Left lung (tissue), 14 donors: ENCODE measurements at regions of chr7 and their contacts with region 1.

Region 1: DNA sequence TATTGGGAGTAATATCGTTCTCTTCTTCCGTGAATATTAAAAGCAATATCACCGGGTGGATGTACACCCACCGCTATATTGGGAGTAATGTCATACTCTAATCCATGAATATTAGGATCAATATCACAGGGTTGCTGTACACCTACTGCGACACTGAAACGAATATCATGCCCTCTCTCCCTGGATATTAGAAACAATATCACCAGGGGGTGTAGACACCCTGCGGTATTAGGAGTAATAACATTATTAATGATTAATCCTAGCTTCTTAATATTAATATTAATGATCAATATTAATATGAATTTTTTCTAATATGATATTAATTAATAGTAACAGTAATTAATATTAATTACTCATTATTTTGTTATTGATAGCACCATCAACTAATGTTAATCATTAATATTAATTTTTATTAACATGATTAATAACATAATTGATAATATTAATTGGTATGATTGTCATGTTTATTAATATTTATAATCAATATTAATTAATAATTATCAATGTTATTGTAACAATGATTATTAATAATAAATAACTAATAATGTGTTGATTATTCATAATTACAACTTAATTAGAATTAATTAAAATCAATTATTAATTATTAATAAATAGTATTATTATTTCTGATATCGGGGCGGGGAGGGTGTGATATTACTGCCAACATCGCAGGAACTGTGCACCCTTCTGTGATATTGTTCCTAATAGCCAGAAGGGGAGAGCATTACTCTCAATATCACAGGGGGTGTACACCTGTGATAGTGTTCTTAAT is 121.3 kb upstream of the C1GALT1 start:
- DNase-seq: no peak
- ATAC-seq: no peak
- H3K4me3 ChIP-seq: no peak overlapping the region
- H3K27ac ChIP-seq: no peak overlapping the region
- H3K4me1 ChIP-seq: no peaks in the 10 kb centered on the region
- H3K27me3 ChIP-seq: no peaks in the 10 kb centered on the region
- CTCF ChIP-seq: no peak

Region 2: DNA sequence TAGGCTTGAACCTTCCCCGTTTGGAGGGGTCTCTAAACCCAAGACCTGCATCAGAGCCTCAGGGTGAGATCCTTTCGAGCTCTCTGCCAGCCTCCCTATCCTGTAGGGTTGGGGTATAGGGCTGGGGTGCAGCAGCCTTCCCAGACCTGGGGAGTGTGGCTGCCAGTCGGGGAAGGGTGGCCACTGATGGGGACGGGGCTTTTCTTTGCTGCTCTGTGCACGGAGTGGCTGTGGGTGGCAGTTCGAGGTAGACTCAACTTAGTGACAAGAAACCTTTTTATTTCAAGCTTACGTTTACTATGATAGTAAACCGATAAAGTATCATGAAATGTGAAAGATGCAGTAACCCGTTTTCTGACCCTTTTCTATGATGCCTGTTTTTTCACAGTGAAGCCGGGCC is 410.9 kb before region 1 on chr7:
- intact Hi-C with region 1: no loop called
- DNase-seq: peak in 1 of 4 donors; percentile 19
- ATAC-seq: no peak
- H3K4me3 ChIP-seq: no peak overlapping the region
- H3K27ac ChIP-seq: no peak overlapping the region
- H3K4me1 ChIP-seq: no peaks in the 10 kb centered on the region
- H3K27me3 ChIP-seq: no peaks in the 10 kb centered on the region
- CTCF ChIP-seq: no peak

Region 3: DNA sequence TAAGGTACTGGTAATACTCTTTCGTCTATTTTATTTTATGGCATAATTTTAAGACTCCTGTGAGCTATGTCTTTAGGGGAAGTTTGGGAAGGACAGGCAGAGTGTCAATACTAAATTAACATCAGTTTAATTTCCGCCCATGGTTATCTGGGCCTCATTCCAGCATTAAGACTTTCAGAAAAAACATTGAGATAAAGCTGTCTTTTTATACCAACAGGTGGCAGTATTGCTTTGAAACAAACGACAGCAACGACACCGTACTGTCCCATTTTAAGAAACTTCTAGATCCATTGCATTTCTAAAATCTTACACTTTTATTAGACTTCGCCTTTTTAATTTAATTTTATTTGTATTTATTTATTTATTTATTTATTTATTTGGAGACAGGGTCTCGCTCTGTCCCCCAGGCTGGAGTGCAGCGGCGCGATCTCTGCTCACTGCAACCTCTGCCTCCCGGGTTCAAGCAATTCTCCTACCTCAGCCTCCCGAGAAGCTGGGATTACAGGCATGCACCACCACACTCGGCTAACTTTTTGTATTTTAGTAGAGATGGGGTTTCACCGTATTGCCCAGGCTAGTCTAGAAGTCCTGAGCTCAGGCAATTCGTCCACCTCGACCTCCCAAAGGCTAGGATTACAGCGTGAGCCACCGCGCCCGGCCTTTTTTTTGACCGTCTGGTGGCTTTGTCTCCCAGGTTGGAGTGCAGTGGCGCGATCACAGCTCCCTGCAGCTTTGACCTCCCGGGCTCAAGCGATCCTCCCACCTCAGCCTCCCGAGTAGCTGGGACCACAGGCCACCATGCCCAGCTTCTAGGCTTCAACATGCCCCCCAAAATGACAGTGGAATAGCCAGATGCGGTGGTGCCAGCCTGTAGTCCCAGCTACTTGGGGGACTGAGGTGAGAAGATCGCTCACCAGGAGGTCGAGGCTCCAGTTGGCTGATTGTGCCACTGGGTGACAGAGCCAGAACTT is 42.6 kb after region 1 on chr7:
- intact Hi-C with region 1: loop called in 1 of 2 experiments (anchors 5 kb)
- DNase-seq: peak in 3 of 4 donors; percentile 37 to 73 (median 64)
- ATAC-seq: peak; percentile 78
- H3K4me3 ChIP-seq: no peak overlapping the region
- H3K27ac ChIP-seq: no peak overlapping the region
- H3K4me1 ChIP-seq: peaks cover 10 to 11% of the 10 kb centered on the region in 2 donors
- H3K27me3 ChIP-seq: no peaks in the 10 kb centered on the region
- CTCF ChIP-seq: peak; percentile 60 to 64

Region 4: DNA sequence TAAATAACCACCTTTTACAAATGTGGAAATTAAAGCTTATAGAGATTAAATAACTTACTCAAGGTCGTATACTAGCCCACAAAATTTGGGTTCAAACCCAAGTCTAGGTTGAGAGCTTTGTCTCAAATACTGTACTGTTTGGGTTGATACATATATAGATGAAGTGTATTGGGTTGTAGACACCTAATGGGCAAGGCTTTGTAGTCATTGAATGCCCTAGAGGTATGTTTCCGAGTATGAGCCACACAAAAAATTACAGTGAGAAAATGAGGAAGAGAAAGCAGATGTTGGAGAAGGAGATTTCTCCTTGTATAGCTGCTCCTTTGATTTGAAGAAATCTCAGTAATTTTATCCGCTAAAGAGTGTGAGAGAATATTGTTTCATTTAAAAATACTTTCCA is 181.9 kb after region 1 on chr7:
- intact Hi-C with region 1: no loop called
- DNase-seq: no peak
- ATAC-seq: no peak
- H3K4me3 ChIP-seq: no peak overlapping the region
- H3K27ac ChIP-seq: no peak overlapping the region
- H3K4me1 ChIP-seq: peaks cover 0 to 7% of the 10 kb centered on the region in 2 donors
- H3K27me3 ChIP-seq: no peaks in the 10 kb centered on the region
- CTCF ChIP-seq: no peak